ENCODE measurements at regions of chr4 and their contacts with region 1.

Region 1: GRCh38 chr4:145719752-145720624 is 40.0 kb downstream of the C4orf51 start:
- DNase-seq: no peak
- H3K4me3 ChIP-seq: no peak overlapping the region
- H3K4me3 Mint-ChIP-seq: no peak overlapping the region
- H3K27ac Mint-ChIP-seq: no peak overlapping the region
- H3K4me1 ChIP-seq: no peaks in the 10 kb centered on the region
- H3K4me1 Mint-ChIP-seq: no peaks in the 10 kb centered on the region
- H3K27me3 ChIP-seq: no peaks in the 10 kb centered on the region
- H3K27me3 Mint-ChIP-seq: peaks cover 4% of the 10 kb centered on the region
- CTCF ChIP-seq: no peak

Region 2: GRCh38 chr4:144820728-144821085 is 899.3 kb before region 1 on chr4:
- CTCF ChIA-PET with region 1: no interaction called
- POLR2A ChIA-PET with region 1: no interaction called
- intact Hi-C with region 1: no loop called
- DNase-seq: no peak
- H3K4me3 ChIP-seq: no peak overlapping the region
- H3K4me3 Mint-ChIP-seq: no peak overlapping the region
- H3K27ac Mint-ChIP-seq: no peak overlapping the region
- H3K4me1 ChIP-seq: no peaks in the 10 kb centered on the region
- H3K4me1 Mint-ChIP-seq: no peaks in the 10 kb centered on the region
- H3K27me3 ChIP-seq: no peaks in the 10 kb centered on the region
- H3K27me3 Mint-ChIP-seq: no peaks in the 10 kb centered on the region
- CTCF ChIP-seq: no peak

Region 3: DNA sequence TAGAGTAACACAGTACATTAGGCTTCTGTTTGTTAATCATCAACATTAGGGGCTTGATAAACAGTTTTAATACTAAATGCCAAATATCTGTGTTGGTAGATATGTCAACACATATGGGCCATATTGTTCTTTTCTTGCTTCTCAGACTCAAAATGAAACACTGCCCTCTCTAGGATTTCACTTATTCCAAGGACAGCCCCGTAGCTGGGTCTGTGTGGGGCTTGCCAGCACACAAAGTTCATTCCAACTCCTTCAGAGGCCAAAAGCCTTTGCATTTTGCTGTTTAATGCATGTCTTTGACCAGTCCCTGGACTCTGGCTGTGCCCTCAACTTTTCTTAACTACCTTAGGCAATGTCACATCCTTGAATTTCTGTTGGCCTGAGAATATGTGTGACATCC is 320.6 kb after region 1 on chr4:
- CTCF ChIA-PET with region 1: no interaction called
- POLR2A ChIA-PET with region 1: no interaction called
- intact Hi-C with region 1: loop called (anchors 5 kb)
- DNase-seq: no peak
- H3K4me3 ChIP-seq: no peak overlapping the region
- H3K4me3 Mint-ChIP-seq: no peak overlapping the region
- H3K27ac Mint-ChIP-seq: no peak overlapping the region
- H3K4me1 ChIP-seq: no peaks in the 10 kb centered on the region
- H3K4me1 Mint-ChIP-seq: no peaks in the 10 kb centered on the region
- H3K27me3 ChIP-seq: no peaks in the 10 kb centered on the region
- H3K27me3 Mint-ChIP-seq: peaks cover 5% of the 10 kb centered on the region
- CTCF ChIP-seq: no peak

Measured in Caco-2 (cell line).